Panc1 (cell line): ENCODE measurements at regions of chr2 and their contacts with region 1.

Region 1: GRCh38 chr2:29114946-29115609 is at the start of gene CLIP4:
- DNase-seq: no peak
- ATAC-seq: peak; percentile 71
- H3K4me3 ChIP-seq: peak within 1 kb of the TSS; percentile 70 to 83
- H3K27ac ChIP-seq: peak within 1 kb of the TSS; percentile 98
- H3K4me1 ChIP-seq: peaks cover 56% of the 10 kb centered on the region
- H3K27me3 ChIP-seq: no peaks in the 10 kb centered on the region
- CTCF ChIP-seq: no peak
- total RNA-seq, gene CLIP4: 43.0 TPM

Region 2: DNA sequence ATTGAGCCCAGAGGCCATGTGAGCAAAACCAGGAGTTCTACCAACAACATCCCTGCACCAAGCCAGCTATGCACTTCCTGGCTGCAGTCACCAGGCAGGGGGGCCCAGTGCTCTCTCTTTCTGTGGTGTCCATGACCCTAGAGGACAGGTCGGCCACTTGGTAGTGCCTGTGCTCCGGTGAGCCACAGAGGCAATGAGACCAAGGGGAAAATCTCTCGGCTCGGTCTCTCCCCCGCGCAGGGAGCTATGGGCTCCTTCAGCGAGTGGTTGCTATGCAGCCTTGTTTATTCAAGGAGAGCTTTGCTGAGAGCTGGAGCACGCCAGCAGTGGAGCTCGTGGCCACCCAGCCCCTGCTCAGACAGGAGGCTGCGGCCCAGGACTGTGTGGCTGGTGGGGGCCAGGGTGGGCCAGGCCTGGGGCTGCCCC is 134.0 kb before region 1 on chr2 and contains the start of gene TOGARAM2:
- CTCF ChIA-PET with region 1: interaction called, 18 read pairs
- POLR2A ChIA-PET with region 1: no interaction called
- in situ Hi-C with region 1: no loop called
- intact Hi-C with region 1: no loop called
- DNase-seq: no peak
- ATAC-seq: peak; percentile 76
- H3K4me3 ChIP-seq: no peak within 1 kb of the TSS
- H3K27ac ChIP-seq: no peak within 1 kb of the TSS
- H3K4me1 ChIP-seq: peaks cover 13% of the 10 kb centered on the region
- H3K27me3 ChIP-seq: no peaks in the 10 kb centered on the region
- CTCF ChIP-seq: no peak
- total RNA-seq, gene TOGARAM2: 0.44 TPM